ENCODE measurements at regions of chr3 and their contacts with region 1.

Region 1: DNA sequence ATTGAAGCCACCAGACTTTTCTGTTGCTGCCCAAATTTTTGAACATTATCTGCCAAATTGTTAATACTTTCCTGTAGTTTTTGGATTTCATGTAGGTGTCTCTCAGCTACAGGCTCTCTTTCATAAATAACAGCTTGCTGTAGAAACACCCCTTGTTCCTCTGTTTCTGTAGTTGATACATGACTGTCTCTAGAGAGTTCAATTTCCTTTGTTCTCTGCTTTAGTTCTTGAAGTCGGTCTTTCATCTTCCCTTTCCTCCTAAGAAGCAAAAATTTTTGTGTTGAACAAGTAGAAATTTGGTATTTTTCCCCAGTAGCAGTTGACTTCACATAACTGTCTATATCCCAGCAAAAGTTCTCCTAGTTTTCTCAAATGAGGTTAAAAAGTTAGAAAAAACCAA is 13.4 kb downstream of the STX19 start:
- DNase-seq: no peak
- H3K4me3 ChIP-seq: no peak overlapping the region
- H3K27ac ChIP-seq: no peak overlapping the region
- H3K4me1 ChIP-seq: no peaks in the 10 kb centered on the region
- H3K27me3 ChIP-seq: no peaks in the 10 kb centered on the region
- CTCF ChIP-seq: no peak
- EP300 ChIP-seq: no peak
- POLR2A ChIP-seq: no peak
- RAD21 ChIP-seq: no peak

Region 2: GRCh38 chr3:94049267-94049666 is 34.2 kb after region 1 on chr3:
- CTCF ChIA-PET with region 1: no interaction called
- POLR2A ChIA-PET with region 1: no interaction called
- DNase-seq: no peak
- H3K4me3 ChIP-seq: no peak overlapping the region
- H3K27ac ChIP-seq: no peak overlapping the region
- H3K4me1 ChIP-seq: no peaks in the 10 kb centered on the region
- H3K27me3 ChIP-seq: no peaks in the 10 kb centered on the region
- CTCF ChIP-seq: no peak
- EP300 ChIP-seq: no peak
- POLR2A ChIP-seq: no peak
- RAD21 ChIP-seq: no peak

Region 3: DNA sequence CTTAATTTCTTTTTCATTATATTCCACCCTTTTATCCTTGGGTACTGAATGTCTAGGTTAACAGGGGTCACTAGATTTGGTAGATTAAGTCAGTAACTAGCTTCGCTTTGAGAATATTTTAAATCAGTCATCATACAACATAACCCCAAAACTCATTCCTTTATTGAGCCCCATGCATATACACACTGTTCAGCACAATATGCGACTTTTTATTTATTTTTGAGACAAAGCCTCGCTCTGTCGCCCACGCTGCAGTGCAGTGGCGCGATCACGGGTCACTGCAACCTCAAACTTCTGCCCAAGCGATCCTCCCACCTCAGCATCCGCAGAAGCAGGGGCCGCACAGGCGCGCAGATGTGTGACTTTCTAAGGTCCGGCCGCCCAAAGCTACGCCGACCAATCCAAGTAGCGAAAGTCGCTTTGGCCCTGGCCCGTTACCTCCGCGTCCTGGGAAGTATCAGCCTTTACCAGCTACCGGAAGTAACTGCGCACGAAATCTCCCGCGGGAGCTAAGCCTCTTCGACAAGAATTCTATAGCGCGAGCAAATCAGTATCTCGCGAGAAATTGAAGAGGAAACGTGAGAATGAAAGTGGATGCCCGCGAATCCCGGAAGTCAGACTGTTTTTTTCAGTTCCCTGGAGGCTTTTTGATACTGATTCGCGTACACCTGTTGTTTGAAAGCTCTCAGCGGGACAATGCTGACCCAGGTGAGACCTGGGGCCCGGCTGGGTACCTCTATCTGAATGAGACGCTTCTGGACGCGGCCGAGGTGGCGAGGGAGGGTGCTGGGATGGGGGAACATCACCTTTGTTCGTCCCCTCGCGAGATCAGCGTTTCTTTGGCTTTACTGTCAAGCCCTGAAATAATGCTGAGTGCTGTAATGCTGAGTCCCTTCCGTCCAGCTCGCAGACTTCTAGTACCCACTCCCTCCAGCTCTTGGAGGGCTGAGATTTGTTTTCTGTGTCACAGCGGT is 47.7 kb after region 1 on chr3 and contains the starts of genes DHFR2 and NSUN3:
- CTCF ChIA-PET with region 1: interaction called, 11 read pairs
- POLR2A ChIA-PET with region 1: no interaction called
- DNase-seq: peak; percentile 83 to 87
- H3K4me3 ChIP-seq: peak within 1 kb of the TSS; percentile 80 to 89 (median 82)
- H3K27ac ChIP-seq: peak within 1 kb of the TSS; percentile 93
- H3K4me1 ChIP-seq: peaks cover 0 to 2% (median 0%) of the 10 kb centered on the region in 4 experiments; a peak in 2 of 7 replicates
- H3K27me3 ChIP-seq: no peaks in the 10 kb centered on the region
- CTCF ChIP-seq: no peak
- EP300 ChIP-seq: no peak
- POLR2A ChIP-seq: peak; percentile 64 to 66; a peak in 2 of 3 replicates
- RAD21 ChIP-seq: no peak
- total RNA-seq, gene DHFR2: 2.2 and 2.6 TPM in 2 replicates
- total RNA-seq, gene NSUN3: 5.1 and 7.2 TPM in 2 replicates

Region 4: GRCh38 chr3:94117729-94118128 is 102.7 kb after region 1 on chr3:
- CTCF ChIA-PET with region 1: no interaction called
- POLR2A ChIA-PET with region 1: no interaction called
- DNase-seq: no peak
- H3K4me3 ChIP-seq: no peak overlapping the region
- H3K27ac ChIP-seq: no peak overlapping the region
- H3K4me1 ChIP-seq: peaks cover 0 to 2% (median 0%) of the 10 kb centered on the region in 4 experiments; a peak in 1 of 7 replicates
- H3K27me3 ChIP-seq: no peaks in the 10 kb centered on the region
- CTCF ChIP-seq: no peak
- EP300 ChIP-seq: no peak
- POLR2A ChIP-seq: no peak
- RAD21 ChIP-seq: no peak

Region 5: DNA sequence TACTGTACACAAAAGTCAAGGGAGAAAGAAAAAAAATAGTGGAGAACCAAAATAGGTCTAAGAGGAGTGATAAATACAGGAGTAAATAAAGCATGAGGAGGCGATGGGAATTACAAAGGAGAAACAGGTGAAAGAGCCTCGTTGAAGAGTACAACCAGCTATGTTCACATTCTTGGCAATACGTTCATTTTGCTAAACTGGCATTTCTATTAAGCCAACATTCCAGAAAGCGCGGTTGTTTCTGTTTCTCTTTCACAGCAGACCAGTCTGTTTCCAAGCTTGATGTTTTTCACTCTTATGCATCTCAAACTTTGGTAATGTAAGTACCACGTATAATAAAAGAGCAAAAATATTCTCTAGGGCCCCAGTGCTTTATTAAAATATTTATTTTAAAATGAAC is 122.4 kb after region 1 on chr3:
- CTCF ChIA-PET with region 1: no interaction called
- POLR2A ChIA-PET with region 1: no interaction called
- DNase-seq: no peak
- H3K4me3 ChIP-seq: no peak overlapping the region
- H3K27ac ChIP-seq: no peak overlapping the region
- H3K4me1 ChIP-seq: peaks cover 0 to 2% (median 0%) of the 10 kb centered on the region in 4 experiments; a peak in 2 of 7 replicates
- H3K27me3 ChIP-seq: no peaks in the 10 kb centered on the region
- CTCF ChIP-seq: no peak
- EP300 ChIP-seq: no peak
- POLR2A ChIP-seq: no peak
- RAD21 ChIP-seq: no peak

Region 6: DNA sequence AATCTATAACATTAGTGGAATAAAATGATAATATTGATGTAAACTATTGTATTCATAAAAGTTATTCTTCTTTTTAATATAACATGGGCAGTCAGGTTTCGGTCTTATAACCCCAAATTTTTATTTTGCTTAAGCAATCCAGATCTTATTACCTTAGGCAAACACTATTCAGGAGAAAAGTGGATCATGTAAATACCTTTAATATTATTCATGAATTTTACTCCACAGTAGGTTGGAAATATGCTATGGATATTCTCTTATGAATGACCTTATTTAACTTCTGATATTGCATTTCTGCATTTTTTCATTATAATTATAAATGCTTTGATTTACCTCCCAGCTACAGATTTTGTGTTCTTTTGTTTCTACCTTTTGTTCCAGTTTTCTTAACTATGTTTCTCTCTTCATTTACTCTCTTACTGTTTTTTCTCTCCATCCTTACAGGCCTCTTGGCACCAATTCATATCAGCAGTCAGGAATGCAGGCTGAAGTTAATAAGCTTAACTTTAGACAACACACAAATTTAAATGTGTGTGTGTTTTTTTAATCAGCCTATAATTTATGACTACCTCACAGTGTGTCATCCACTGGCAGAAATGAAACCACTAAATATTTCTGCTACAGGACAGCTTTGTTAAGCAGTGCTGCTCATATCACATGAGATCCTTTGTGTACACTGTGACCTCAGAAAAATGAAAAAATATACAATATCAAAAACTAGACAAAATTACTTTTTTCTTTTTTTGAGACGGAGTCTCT is 158.8 kb after region 1 on chr3:
- CTCF ChIA-PET with region 1: no interaction called
- POLR2A ChIA-PET with region 1: no interaction called
- DNase-seq: no peak
- H3K4me3 ChIP-seq: no peak overlapping the region
- H3K27ac ChIP-seq: no peak overlapping the region
- H3K4me1 ChIP-seq: no peaks in the 10 kb centered on the region; a peak in 1 of 7 replicates
- H3K27me3 ChIP-seq: no peaks in the 10 kb centered on the region
- CTCF ChIP-seq: no peak
- EP300 ChIP-seq: no peak
- POLR2A ChIP-seq: no peak
- RAD21 ChIP-seq: no peak